ENCODE measurements at regions of chr19 and their contacts with region 1.

Region 1: GRCh38 chr19:45439569-45440254 is 16.0 kb upstream of the ERCC1 start:
- DNase-seq: peak; percentile 90
- ATAC-seq: peak; percentile 56 to 83 (median 70)
- H3K4me3 ChIP-seq: peak overlapping the region; percentile 4 to 77 (median 69)
- H3K27ac ChIP-seq: peak overlapping the region; percentile 88 to 99 (median 94)
- H3K4me1 ChIP-seq: peaks cover 0 to 42% (median 26%) of the 10 kb centered on the region in 9 donors
- H3K27me3 ChIP-seq: no peaks in the 10 kb centered on the region
- CTCF ChIP-seq: peak; percentile 99 to 100 (median 99)

Region 2: DNA sequence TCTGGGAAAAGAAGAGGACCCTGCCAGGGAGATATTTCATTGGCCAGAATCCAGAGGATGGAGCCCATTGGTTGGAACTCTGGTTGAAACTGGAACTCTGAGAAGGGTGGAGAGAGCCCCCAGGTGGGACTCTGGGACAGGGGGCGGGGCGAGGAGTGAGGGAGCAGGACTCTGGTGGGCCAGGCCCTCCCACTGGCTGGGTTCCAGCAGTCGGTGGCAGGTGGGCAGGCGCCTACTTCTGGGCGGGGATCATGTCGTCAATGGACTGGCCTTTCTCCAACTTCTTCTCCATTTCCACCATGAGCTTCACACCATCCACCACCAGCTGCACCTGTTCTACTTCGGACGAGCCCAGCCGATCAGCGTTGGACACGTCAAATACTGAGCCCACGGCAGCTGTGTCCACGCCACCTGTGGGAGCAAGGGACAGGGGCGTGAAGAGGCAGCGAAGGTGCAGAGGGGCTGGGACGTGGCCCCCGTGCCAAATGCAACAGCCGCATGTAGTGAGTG is 133.1 kb before region 1 on chr19:
- intact Hi-C with region 1: no loop called
- DNase-seq: no peak
- ATAC-seq: peak in 1 of 8 donors; percentile 12
- H3K4me3 ChIP-seq: no peak overlapping the region
- H3K27ac ChIP-seq: peak overlapping the region in 1 of 10 donors; percentile 7
- H3K4me1 ChIP-seq: peaks cover 0 to 32% (median 0%) of the 10 kb centered on the region in 9 donors
- H3K27me3 ChIP-seq: no peaks in the 10 kb centered on the region
- CTCF ChIP-seq: no peak

Region 3: DNA sequence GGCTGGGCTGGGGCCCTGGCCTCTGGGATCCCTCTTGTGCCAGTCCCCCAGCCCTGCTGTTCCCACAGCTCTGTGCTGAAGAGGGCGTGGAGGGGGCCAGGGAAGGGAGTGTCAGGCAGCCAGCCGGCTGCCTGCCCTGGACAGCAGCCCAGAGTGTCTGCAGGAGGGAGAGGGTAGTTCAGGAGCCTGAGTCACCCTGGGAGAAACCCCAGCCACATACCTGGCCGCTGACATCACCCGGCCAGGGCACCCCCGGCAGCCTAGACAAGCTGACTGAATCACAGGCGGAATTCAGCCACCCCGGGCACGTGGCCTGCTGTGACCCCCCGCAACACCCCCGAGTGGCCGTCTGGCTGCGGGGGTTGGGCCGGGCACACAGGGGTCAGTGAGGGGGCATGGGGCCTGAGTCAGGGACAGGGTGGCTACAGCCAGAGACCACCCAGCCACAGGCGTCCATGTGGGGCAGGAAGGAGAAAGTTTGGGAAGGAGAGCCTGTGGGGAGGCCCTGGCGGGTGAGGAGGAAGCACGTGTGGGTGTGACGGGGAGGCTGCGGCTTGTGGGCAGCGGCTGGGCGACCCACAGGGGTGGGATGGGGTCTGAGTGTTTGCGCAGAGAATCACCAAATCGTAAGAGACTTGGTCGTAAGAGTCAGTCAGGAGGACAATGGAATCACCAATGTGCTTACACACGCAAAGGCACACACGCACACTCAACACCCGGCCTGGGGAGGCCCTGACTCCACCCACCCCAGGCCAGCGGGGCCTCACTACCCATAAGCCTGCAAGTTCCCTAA is 16.2 kb after region 1 on chr19:
- intact Hi-C with region 1: no loop called
- DNase-seq: peak; percentile 86 to 88
- ATAC-seq: peak; percentile 73 to 95 (median 93)
- H3K4me3 ChIP-seq: peak overlapping the region in 5 of 10 donors; percentile 15 to 30 (median 26)
- H3K27ac ChIP-seq: peak overlapping the region in 8 of 10 donors; percentile 69 to 82 (median 77)
- H3K4me1 ChIP-seq: peaks cover 7 to 49% (median 25%) of the 10 kb centered on the region in 9 donors
- H3K27me3 ChIP-seq: no peaks in the 10 kb centered on the region
- CTCF ChIP-seq: no peak

Region 4: GRCh38 chr19:45469132-45469944 is 29.6 kb after region 1 on chr19:
- intact Hi-C with region 1: loop called in 1 of 10 experiments (anchors 2 kb)
- DNase-seq: peak; percentile 93 to 94
- ATAC-seq: peak; percentile 88 to 92 (median 90)
- H3K4me3 ChIP-seq: peak overlapping the region; percentile 45 to 82 (median 74)
- H3K27ac ChIP-seq: peak overlapping the region; percentile 88 to 98 (median 94)
- H3K4me1 ChIP-seq: peaks cover 8 to 46% (median 38%) of the 10 kb centered on the region in 9 donors
- H3K27me3 ChIP-seq: peaks cover 0 to 33% (median 0%) of the 10 kb centered on the region in 7 donors
- CTCF ChIP-seq: peak in 5 of 9 donors; percentile 1 to 20 (median 8)

Region 5: DNA sequence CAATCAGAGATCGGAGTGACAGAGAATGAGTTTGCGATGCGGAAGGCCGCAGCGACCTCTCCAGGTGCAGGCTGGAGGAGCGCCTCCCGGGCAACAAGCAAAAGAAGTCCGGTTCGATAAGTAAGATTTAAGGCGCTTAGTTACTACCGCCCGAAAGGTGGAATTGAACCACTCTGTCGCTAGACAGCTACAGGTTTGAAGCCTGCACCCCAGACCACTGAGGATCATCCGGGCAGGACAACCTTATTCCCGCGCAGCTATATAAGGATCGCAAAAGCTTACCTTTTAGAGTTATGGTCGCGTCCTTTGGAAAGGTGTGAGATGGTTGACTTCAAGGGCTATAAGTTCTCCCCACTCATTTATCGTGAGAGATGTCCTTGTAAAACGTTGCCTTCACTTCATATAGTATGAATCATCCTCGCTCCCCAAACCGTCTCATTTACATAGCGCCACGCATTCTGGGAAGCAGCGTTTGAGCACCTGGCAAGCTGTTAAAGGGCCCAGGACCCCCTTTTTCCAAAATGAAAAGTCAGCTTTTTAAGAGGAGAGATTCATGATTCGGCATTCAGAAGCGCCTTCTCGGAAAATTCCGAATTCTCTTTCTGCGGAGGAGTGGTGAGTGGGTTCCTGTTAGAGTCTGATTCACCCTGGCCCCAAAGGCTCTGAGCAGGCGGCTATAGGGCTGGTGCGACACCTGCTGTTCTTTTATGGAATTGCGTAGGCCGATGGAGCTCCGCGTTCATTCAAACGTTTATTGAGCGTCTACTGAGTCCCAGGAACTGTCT is 38.9 kb after region 1 on chr19:
- intact Hi-C with region 1: loop called (anchors 1 to 2 kb)
- DNase-seq: peak; percentile 80 to 86
- ATAC-seq: peak; percentile 84 to 97 (median 94)
- H3K4me3 ChIP-seq: peak overlapping the region in 9 of 10 donors; percentile 37 to 71 (median 61)
- H3K27ac ChIP-seq: peak overlapping the region; percentile 86 to 100 (median 94)
- H3K4me1 ChIP-seq: peaks cover 0 to 29% (median 11%) of the 10 kb centered on the region in 9 donors
- H3K27me3 ChIP-seq: peaks cover 0 to 21% (median 0%) of the 10 kb centered on the region in 7 donors
- CTCF ChIP-seq: peak; percentile 90 to 99 (median 97)

Region 6: GRCh38 chr19:45601524-45602374 is 162.0 kb after region 1 on chr19 and contains the start of gene GPR4:
- intact Hi-C with region 1: loop called in 1 of 10 experiments (anchors 5 kb)
- DNase-seq: peak; percentile 44 to 51
- ATAC-seq: peak; percentile 46 to 83 (median 66)
- H3K4me3 ChIP-seq: peak within 1 kb of the TSS; percentile 50 to 83 (median 68)
- H3K27ac ChIP-seq: peak within 1 kb of the TSS; percentile 30 to 94 (median 90)
- H3K4me1 ChIP-seq: peaks cover under 1 to 54% (median 43%) of the 10 kb centered on the region in 9 donors
- H3K27me3 ChIP-seq: peaks cover 0 to 78% (median 54%) of the 10 kb centered on the region in 7 donors
- CTCF ChIP-seq: no peak
- total RNA-seq, gene GPR4: 2.3 to 29.4 (median 5.2) TPM

Measured in heart right ventricle (tissue), 16 donors.